ENCODE measurements at regions of chr1 and their contacts with region 1.

Region 1: GRCh38 chr1:180178511-180179161 is 24.0 kb downstream of the QSOX1 start:
- DNase-seq: peak; percentile 73
- ATAC-seq: peak; percentile 57
- H3K4me3 Mint-ChIP-seq: no peak overlapping the region
- H3K27ac Mint-ChIP-seq: no peak overlapping the region
- H3K4me1 Mint-ChIP-seq: no peaks in the 10 kb centered on the region
- H3K27me3 Mint-ChIP-seq: no peaks in the 10 kb centered on the region

Region 2: DNA sequence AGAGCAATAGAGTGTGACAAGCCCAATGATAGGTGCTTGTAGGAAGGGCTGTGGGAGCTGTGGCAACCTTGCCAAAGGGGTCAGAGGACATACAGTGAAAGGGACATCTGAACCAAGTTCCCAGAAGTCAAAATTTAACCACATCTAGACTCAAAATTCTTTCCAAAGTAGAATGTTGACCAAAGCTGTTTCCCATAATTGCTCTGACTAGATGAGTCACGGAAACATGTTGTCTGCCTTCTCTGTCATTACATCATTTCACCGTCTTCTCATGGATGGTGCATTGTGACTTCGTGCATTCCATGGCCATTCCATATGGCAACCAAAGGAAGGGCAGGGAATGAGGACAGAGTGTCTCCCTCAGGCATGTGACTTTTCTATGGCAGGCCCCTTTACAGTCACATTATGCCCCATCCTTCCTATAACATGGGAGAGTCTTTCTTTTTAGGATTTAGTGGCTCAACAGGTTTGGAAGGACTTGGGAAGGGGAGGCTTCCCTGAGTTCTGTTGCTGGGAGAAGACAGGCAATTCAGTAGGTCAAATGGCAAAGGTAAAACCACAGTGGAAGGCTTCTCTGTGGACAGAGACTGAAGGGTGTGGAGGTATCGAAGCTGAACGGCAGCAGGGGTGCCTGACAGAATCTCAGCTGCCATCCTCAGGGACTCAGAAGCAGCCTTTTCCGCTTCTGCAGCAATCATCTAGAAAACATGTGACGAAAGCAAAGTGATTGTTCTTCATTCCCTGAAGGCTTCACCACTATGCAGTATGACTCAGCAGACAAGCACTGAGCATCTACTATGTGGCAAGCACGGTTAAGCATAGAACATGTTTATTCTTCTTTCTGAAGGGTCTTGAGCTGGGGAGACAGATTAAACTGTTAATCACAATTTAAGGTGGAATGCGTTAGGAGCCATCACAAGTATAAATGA is 627.6 kb before region 1 on chr1:
- CTCF ChIA-PET with region 1: no interaction called
- DNase-seq: no peak
- ATAC-seq: no peak
- H3K4me3 Mint-ChIP-seq: no peak overlapping the region
- H3K27ac Mint-ChIP-seq: no peak overlapping the region
- H3K4me1 Mint-ChIP-seq: no peaks in the 10 kb centered on the region
- H3K27me3 Mint-ChIP-seq: no peaks in the 10 kb centered on the region

Region 3: GRCh38 chr1:179706339-179706941 is 472.2 kb before region 1 on chr1:
- CTCF ChIA-PET with region 1: interaction called, 27 read pairs
- DNase-seq: peak; percentile 63
- ATAC-seq: no peak
- H3K4me3 Mint-ChIP-seq: no peak overlapping the region
- H3K27ac Mint-ChIP-seq: no peak overlapping the region
- H3K4me1 Mint-ChIP-seq: no peaks in the 10 kb centered on the region
- H3K27me3 Mint-ChIP-seq: peaks cover 6% of the 10 kb centered on the region

Region 4: DNA sequence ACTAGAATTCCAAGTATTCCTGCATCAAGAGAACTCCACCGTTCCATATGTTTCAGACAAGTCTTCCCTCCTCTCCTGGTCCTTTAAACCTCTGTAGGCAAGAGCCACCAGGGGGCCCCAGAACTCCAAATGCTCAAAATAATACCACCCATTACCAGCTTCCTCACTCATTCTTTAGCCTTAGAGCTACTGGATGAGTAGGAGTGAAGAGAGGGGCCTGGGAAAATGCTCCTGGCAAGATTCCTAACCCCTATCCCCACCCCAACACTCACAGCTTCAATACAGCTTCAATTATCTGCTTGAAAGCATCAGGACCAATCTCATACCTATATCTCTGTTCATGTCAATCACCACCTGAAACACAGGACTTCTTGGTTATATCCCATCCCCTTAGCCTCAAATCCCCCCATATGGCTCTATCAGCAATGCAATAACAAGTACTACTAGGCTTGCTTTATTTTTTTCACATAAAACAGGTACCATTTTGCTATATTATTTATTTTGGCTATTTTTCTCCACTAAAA is 310.8 kb before region 1 on chr1:
- CTCF ChIA-PET with region 1: interaction called, 63 read pairs
- DNase-seq: peak; percentile 61
- ATAC-seq: peak; percentile 86
- H3K4me3 Mint-ChIP-seq: no peak overlapping the region
- H3K27ac Mint-ChIP-seq: no peak overlapping the region
- H3K4me1 Mint-ChIP-seq: peaks cover 8% of the 10 kb centered on the region
- H3K27me3 Mint-ChIP-seq: no peaks in the 10 kb centered on the region

Region 5: DNA sequence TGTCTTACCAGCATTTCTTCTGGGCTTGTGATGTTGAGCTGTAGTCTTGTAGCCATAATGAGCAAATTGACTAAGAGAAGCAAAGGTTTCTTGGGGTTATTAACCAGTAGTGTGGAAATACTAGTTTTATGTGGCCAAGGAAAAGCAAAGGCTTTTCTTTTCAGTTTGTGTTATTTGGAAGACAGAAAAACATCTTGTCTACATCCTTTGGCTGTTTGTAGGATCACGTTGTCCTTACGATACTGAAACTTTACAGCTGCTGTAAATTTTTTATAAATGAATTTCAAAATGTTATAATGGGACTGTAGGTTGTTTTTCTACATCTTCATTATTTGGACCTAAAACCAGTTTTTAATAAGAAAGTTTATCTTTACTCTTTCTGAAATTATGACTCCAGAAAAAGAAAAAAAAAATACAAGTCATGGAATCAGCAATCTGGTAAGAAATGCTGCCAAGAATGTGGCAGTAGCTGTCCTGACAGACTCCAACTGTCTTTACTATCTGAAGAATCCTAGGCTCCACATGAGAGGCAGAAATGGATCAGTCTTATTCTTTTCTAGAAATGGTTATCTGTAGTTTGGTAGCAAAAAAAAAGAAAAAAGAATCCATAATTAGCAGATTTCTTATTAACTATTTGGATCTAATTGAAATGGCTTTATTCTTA is 65.5 kb before region 1 on chr1:
- CTCF ChIA-PET with region 1: interaction called, 10 read pairs
- DNase-seq: no peak
- ATAC-seq: no peak
- H3K4me3 Mint-ChIP-seq: no peak overlapping the region
- H3K27ac Mint-ChIP-seq: no peak overlapping the region
- H3K4me1 Mint-ChIP-seq: peaks cover 4% of the 10 kb centered on the region
- H3K27me3 Mint-ChIP-seq: no peaks in the 10 kb centered on the region

Region 6: DNA sequence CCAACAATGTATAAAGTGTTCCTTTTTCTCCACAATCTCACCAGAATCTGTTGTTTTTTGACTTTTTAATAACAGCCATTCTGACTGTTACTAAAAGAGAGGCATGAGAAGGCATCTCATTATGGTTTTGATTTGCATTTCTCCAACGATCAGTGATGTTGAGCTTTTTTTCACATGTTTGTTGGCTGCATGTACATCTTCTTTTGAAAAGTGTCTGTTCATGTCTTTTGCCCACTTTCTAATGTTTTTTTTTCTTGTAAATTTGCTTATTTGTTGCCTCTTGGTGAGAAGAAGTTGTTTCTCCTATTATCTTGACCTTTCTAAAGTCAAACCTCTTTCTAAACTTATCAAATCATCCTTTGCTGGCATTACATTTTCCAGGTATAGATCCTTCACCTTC is 243.0 kb after region 1 on chr1:
- CTCF ChIA-PET with region 1: no interaction called
- DNase-seq: no peak
- ATAC-seq: no peak
- H3K4me3 Mint-ChIP-seq: no peak overlapping the region
- H3K27ac Mint-ChIP-seq: no peak overlapping the region
- H3K4me1 Mint-ChIP-seq: no peaks in the 10 kb centered on the region
- H3K27me3 Mint-ChIP-seq: no peaks in the 10 kb centered on the region